Activated T-helper 1 cell treated with anti-CD3 and anti-CD28 coated beads, Interleukin-12 subunit alpha, Interleukin-12 subunit beta, Interleukin-2, Interleukin-4 antibody, amounts not matched to agents 30 ng/mL and 10 ng/mL and 1 ng/mL, durations not matched to agents 14 hours and 24 hours and 36 hours (primary cell): ENCODE measurements at regions of chr6 and their contacts with region 1.

Region 1: GRCh38 chr6:111861431-111861885 is 11.8 kb downstream of the FYN start:
- DNase-seq: no peak
- H3K4me3 Mint-ChIP-seq: no peak overlapping the region
- H3K27ac Mint-ChIP-seq: peak overlapping the region; percentile 32
- H3K4me1 Mint-ChIP-seq: peaks cover 97% of the 10 kb centered on the region
- H3K27me3 Mint-ChIP-seq: no peaks in the 10 kb centered on the region

Region 2: DNA sequence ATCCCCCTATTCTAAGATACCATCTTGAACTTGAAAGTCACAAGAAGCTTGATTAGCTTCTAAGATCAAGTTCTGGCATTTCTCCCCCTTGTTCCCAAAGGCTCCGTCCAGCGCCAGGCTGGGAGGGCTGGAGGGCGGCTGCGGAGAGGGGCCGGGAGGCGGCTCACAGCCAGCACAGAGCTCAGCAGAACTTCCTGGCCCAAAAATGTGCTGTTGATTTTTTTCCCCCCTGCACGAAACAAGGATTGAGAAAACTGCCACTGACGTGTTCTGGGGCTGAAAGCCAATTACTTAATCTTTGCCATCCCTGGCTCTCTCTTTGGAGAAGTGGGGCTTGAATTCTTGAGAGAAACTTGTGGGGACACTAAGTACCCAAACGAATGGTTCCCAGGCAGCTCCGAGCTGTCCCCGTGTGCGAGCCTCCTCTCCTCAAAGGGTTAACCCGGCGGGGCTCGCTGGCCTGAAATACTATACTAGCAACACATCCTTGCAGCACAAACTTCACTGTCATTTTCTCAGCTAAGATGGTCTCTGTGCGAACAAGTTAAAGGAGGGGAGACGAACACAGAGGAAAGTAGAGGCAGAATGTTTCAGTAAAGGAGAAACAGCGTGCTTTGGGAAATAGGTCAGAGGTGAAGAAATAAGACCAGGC is 256.2 kb before region 1 on chr6:
- intact Hi-C with region 1: no loop called
- DNase-seq: peak; percentile 11
- H3K4me3 Mint-ChIP-seq: peak overlapping the region; percentile 90
- H3K27ac Mint-ChIP-seq: peak overlapping the region; percentile 100
- H3K4me1 Mint-ChIP-seq: peaks cover 56% of the 10 kb centered on the region
- H3K27me3 Mint-ChIP-seq: no peaks in the 10 kb centered on the region

Region 3: DNA sequence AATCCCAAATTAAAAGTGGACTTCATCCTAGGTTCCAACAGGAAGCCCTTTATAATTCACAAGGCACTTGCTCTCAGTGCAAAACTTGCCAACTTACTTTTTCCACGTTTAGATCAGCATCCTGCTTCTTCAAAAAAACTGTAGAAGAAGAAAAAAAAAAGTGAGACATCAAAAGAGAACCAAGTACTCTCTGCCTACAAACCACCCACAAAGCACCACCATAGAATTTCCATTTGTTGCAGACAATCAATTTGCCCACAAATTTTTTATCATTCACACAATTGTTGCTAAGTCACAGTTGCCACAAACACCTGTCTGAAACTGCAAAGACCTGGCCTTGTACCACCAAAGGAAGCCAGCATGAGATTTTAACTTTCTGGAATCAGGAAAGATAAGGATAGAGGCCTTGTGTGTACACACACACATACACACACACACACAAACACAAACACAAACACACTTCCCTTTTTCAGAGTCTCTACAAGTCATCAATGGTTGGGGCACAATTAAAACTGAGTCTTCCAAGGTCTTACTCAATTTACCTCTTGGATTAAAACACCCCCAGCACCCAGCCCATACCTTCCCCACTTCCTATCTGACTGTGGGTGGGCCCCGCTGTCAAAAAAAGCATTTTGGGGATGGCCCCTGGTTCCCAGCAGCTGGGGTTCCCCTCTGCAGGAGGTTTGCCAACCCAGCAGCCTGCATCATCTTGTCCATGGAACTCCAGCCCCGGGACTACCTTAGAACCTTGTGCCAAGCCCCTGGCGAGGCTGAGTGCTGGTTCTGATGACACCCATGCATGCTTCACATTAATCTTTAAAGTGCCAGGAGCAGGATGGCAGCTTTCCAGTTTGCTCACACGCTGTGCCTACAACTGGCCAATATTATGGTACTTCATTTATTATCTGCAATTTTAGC is 14.7 kb before region 1 on chr6:
- intact Hi-C with region 1: loop called (anchors 1 kb)
- DNase-seq: peak; percentile 35
- H3K4me3 Mint-ChIP-seq: peak overlapping the region; percentile 65
- H3K27ac Mint-ChIP-seq: no peak overlapping the region
- H3K4me1 Mint-ChIP-seq: peaks cover 30% of the 10 kb centered on the region
- H3K27me3 Mint-ChIP-seq: no peaks in the 10 kb centered on the region